Mammary epithelial cell (primary cell): ENCODE measurements at regions of chr9 and their contacts with region 1.

Region 1: DNA sequence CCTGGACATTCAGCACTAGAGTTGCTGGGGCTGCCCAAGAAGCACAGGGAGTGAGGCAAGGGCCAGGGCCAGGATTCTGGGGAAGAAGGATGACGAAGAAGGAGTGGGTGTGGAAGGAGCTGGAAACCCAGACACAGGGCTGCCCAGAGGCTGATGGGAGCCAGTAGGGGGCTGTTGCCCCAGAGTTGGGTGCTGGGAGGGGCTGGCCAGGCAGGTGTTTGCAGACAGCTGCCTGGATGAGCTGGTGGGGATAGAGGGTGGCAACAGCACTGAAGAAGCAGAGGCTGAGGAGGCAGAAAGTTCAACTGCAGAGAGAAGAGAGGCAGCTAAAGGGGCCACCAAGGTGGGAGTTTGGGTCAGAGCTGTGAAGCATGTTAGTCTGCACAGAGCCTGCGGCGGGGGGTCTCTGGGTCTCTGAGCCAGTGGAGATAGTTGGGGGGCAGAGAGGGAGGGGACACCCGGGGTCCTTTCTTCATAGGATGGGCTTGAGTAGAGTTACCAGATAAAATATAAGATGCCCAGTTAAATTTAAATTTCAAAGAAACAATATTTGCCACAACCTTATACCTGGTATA is 2.5 kb upstream of the AQP7 start:
- DNase-seq: peak; percentile 25
- H3K4me3 ChIP-seq: no peak overlapping the region
- H3K27ac ChIP-seq: no peak overlapping the region
- H3K4me1 ChIP-seq: peaks cover 21% of the 10 kb centered on the region
- H3K27me3 ChIP-seq: no peaks in the 10 kb centered on the region
- CTCF ChIP-seq: no peak

Region 2: GRCh38 chr9:33446946-33447798 is 42.3 kb after region 1 on chr9 and contains the start of gene AQP3:
- CTCF ChIA-PET with region 1: interaction called, 4 read pairs
- dilution Hi-C with region 1: no loop called
- in situ Hi-C with region 1: loop called in 1 of 2 experiments (anchors 5 kb)
- intact Hi-C with region 1: no loop called
- DNase-seq: peak; percentile 58
- H3K4me3 ChIP-seq: peak within 1 kb of the TSS; percentile 1 to 64 (median 35)
- H3K27ac ChIP-seq: no peak within 1 kb of the TSS
- H3K4me1 ChIP-seq: peaks cover 39% of the 10 kb centered on the region
- H3K27me3 ChIP-seq: no peaks in the 10 kb centered on the region
- CTCF ChIP-seq: peak in 1 of 2 donors; percentile 48
- total RNA-seq, gene AQP3: 11.0 to 20.0 TPM

Region 3: GRCh38 chr9:33458444-33458843 is 53.6 kb after region 1 on chr9:
- CTCF ChIA-PET with region 1: interaction called, 4 read pairs
- dilution Hi-C with region 1: loop called (anchors 5 kb)
- in situ Hi-C with region 1: loop called in 1 of 2 experiments (anchors 5 kb)
- intact Hi-C with region 1: no loop called
- DNase-seq: peak; percentile 82
- H3K4me3 ChIP-seq: no peak overlapping the region
- H3K27ac ChIP-seq: peak overlapping the region; percentile 23
- H3K4me1 ChIP-seq: peaks cover 26% of the 10 kb centered on the region
- H3K27me3 ChIP-seq: no peaks in the 10 kb centered on the region
- CTCF ChIP-seq: no peak

Region 4: GRCh38 chr9:33466565-33467495 is 62.0 kb after region 1 on chr9:
- CTCF ChIA-PET with region 1: interaction called, 11 read pairs
- dilution Hi-C with region 1: no loop called
- in situ Hi-C with region 1: loop called in 1 of 2 experiments (anchors 5 kb)
- intact Hi-C with region 1: loop called (anchors 1 kb)
- DNase-seq: no peak
- H3K4me3 ChIP-seq: no peak overlapping the region
- H3K27ac ChIP-seq: no peak overlapping the region
- H3K4me1 ChIP-seq: peaks cover 17% of the 10 kb centered on the region
- H3K27me3 ChIP-seq: no peaks in the 10 kb centered on the region
- CTCF ChIP-seq: peak; percentile 98

Region 5: GRCh38 chr9:33623658-33624586 is 219.0 kb after region 1 on chr9:
- CTCF ChIA-PET with region 1: no interaction called
- dilution Hi-C with region 1: no loop called
- in situ Hi-C with region 1: no loop called
- intact Hi-C with region 1: loop called (anchors 5 kb)
- DNase-seq: peak; percentile 74
- H3K4me3 ChIP-seq: no peak overlapping the region
- H3K27ac ChIP-seq: no peak overlapping the region
- H3K4me1 ChIP-seq: peaks cover 29% of the 10 kb centered on the region
- H3K27me3 ChIP-seq: no peaks in the 10 kb centered on the region
- CTCF ChIP-seq: peak; percentile 77 to 84

Region 6: GRCh38 chr9:33721674-33722358 is 316.9 kb after region 1 on chr9:
- CTCF ChIA-PET with region 1: no interaction called
- dilution Hi-C with region 1: no loop called
- in situ Hi-C with region 1: no loop called
- intact Hi-C with region 1: loop called (anchors 1 kb)
- DNase-seq: peak; percentile 65
- H3K4me3 ChIP-seq: no peak overlapping the region
- H3K27ac ChIP-seq: no peak overlapping the region
- H3K4me1 ChIP-seq: no peaks in the 10 kb centered on the region
- H3K27me3 ChIP-seq: no peaks in the 10 kb centered on the region
- CTCF ChIP-seq: peak; percentile 99 to 100